GM12878 (cell line): ENCODE measurements at regions of chr17 and their contacts with region 1.

Region 1: DNA sequence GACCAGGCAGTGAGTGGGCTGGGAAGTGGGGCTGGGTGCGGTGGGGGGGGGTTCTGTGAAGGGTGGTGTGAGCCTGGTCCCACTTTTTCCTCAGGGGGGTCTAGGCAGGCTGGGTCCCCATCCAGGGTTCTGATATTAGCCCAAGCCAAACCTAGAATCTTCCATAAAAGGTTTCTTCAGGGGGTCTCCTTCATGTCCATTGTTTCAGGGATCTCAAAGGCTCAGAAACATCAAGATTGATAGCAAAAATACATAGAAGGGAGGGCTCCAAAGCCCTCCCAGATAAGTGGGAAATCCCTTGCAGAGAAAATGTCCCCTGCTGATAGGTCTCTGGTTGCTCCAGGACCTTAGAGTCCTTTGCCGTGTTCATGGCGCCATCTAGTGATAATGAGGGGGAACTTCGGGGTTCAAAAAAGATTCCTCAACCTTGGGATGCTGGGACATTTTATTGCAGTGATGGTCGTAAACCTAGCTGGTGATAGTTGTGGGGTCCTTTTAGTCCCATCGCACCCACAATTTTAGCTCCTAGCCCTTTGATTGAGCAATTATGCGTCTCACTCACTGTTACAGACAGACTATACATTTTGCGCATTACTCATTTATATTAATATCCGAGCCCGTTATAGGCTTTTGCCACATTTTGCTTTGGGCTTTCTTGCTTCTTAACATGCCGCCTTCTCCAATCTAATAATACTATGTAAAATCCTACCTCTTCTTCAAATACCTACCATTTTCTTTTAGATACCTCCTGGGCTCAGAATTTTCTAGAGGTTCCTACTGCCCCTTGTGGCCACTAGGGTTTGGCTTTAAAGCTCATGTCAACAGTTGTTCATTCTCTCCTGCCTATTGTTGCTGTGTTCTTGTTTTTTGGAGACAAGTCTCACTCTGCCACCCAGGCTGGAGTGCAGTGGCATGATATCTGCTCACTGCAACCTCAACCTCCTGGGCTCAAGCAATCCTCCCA is 35.1 kb downstream of the IGF2BP1 start:
- DNase-seq: peak; percentile 16
- ATAC-seq: peak; percentile 92
- H3K4me3 ChIP-seq: no peak overlapping the region
- H3K27ac ChIP-seq: no peak overlapping the region
- H3K4me1 ChIP-seq: no peaks in the 10 kb centered on the region
- H3K27me3 ChIP-seq: no peaks in the 10 kb centered on the region
- CTCF ChIP-seq: peak; percentile 69 to 96 (median 86)
- EP300 ChIP-seq: no peak
- POLR2A ChIP-seq: no peak
- RAD21 ChIP-seq: peak; percentile 97

Region 2: GRCh38 chr17:48724251-48725003 is 307.8 kb before region 1 on chr17:
- CTCF ChIA-PET with region 1: interaction called, 12 read pairs
- POLR2A ChIA-PET with region 1: no interaction called
- RAD21 ChIA-PET with region 1: no interaction called
- SMC1A ChIA-PET with region 1: interaction called, 3 read pairs
- in situ Hi-C with region 1: no loop called
- intact Hi-C with region 1: no loop called
- DNase-seq: peak; percentile 3
- ATAC-seq: peak; percentile 94
- H3K4me3 ChIP-seq: no peak overlapping the region
- H3K27ac ChIP-seq: no peak overlapping the region
- H3K4me1 ChIP-seq: no peaks in the 10 kb centered on the region; the same call in 1 of the 2 replicates
- H3K27me3 ChIP-seq: peaks cover 34 to 58% of the 10 kb centered on the region in 2 experiments
- CTCF ChIP-seq: peak; percentile 60 to 75 (median 73)
- EP300 ChIP-seq: no peak
- POLR2A ChIP-seq: no peak
- RAD21 ChIP-seq: peak; percentile 83

Region 3: DNA sequence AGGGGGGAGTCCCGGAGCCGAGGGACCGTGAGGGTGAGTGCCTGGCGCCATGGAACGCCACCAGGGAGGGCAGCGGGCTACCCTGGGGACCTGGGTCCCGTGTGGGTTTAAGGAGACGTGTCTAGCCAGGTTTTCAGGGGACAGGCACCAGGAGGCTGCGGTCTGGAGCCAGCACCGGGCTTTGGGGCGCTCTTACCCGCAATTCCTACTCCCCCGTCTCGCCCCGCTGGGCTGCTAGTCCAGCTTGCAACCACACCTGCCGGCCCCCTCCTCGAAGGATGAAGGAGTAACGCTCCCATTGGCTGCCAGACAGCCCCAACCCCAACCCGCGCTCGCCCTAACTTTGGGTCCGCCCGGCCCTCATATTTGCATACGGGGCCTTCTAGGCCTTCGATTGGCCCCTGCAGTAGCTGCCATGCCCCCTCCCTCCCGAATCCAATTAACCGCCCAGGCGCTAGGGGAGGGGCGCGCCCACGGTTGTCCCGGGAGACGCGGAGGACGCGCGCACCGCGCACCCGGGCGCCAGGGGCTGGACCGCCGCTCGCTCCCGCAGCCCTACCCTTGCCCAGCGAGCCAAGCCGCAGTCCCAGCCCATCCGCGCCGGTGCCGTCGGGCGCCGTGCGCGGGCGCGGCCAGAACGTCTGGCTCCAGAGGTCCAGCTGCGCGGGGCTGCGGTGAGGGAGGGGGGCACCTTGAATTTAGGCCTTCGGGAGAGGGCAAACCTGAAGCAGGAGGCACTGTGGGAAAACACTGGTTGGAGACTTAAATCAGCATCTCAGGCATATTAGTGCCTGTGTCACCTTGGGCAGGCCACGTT is 215.3 kb before region 1 on chr17 and contains the start of gene TTLL6:
- CTCF ChIA-PET with region 1: interaction called, 17 read pairs
- POLR2A ChIA-PET with region 1: no interaction called
- RAD21 ChIA-PET with region 1: interaction called, 5 read pairs
- SMC1A ChIA-PET with region 1: interaction called, 3 read pairs
- in situ Hi-C with region 1: no loop called
- intact Hi-C with region 1: no loop called
- DNase-seq: no peak
- ATAC-seq: peak; percentile 97
- H3K4me3 ChIP-seq: peak within 1 kb of the TSS; percentile 58
- H3K27ac ChIP-seq: no peak within 1 kb of the TSS
- H3K4me1 ChIP-seq: peaks cover 12% of the 10 kb centered on the region
- H3K27me3 ChIP-seq: peaks cover 0 to 6% of the 10 kb centered on the region in 2 experiments; a peak in 1 of 4 replicates
- CTCF ChIP-seq: no peak
- EP300 ChIP-seq: no peak
- POLR2A ChIP-seq: no peak
- RAD21 ChIP-seq: no peak
- polyA plus RNA-seq, gene TTLL6: not detected

Region 4: DNA sequence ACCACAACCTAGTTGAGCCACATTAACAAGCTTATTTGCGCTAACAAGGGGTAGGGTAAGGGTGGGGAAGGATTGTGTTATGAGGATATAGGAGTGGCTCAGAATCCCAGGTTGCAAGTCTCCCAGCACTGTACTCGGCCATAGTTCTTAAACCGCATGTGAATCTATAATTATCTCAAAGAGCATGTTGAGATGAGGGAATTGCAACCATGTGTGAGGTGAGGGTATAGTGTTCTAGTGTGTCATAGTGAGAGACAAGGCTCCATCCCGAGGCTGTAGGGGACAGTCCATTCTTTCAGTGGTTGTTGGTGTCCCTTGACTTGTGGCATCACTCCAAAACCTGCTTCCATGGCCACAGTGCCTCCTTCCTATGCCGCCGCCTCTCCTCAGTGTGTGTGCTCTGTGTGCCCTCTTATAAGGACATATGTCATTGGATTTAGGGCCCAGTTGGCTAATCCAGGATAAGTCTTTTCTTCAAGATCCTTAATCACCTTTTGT is 162.4 kb before region 1 on chr17:
- CTCF ChIA-PET with region 1: no interaction called
- POLR2A ChIA-PET with region 1: no interaction called
- RAD21 ChIA-PET with region 1: no interaction called
- SMC1A ChIA-PET with region 1: no interaction called
- in situ Hi-C with region 1: no loop called
- intact Hi-C with region 1: no loop called
- DNase-seq: no peak
- ATAC-seq: no peak
- H3K4me3 ChIP-seq: no peak overlapping the region
- H3K27ac ChIP-seq: no peak overlapping the region
- H3K4me1 ChIP-seq: no peaks in the 10 kb centered on the region
- H3K27me3 ChIP-seq: no peaks in the 10 kb centered on the region
- CTCF ChIP-seq: no peak
- EP300 ChIP-seq: no peak
- POLR2A ChIP-seq: no peak
- RAD21 ChIP-seq: no peak

Region 5: DNA sequence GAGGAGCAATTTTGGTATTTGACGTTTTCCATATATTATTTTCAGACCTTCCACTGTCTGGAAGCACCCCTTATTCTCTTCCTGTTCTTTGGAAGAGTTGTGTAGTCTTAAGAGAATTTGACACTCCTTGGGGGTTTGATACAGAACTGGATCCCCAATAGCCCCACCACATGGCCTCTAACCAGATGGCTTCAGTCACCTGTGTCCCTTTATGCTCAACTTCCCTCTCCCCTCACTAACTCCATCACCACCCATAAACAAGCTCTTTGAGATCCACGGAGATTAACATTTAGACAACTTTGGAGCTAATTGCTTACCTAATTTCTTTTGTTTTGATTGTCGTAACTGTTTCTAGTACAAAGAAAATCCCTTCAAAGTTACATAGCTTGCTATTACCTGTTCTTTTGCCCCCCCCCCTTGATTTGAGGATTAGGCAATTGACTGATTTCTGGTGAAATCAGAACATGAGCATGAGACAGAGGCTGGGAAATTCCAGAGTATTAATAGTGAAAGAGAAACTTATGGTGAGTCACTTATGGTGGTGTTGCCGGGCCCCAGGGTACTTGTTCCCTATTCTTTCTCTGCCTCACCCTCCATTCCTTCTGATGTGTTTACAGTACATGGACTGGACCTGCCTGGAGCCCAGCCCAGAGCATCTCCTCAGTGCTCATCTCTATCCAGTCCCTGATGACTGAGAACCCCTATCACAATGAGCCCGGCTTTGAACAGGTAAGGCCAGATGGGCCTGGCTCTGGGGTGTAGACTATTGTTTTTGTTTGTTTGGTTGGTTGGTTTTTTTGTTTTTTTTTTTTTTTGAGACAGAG is 116.6 kb before region 1 on chr17:
- CTCF ChIA-PET with region 1: interaction called, 12 read pairs
- POLR2A ChIA-PET with region 1: interaction called, 4 read pairs
- RAD21 ChIA-PET with region 1: interaction called, 4 read pairs
- SMC1A ChIA-PET with region 1: interaction called, 3 read pairs
- in situ Hi-C with region 1: no loop called
- intact Hi-C with region 1: no loop called
- DNase-seq: peak; percentile 74
- ATAC-seq: peak; percentile 86
- H3K4me3 ChIP-seq: peak overlapping the region; percentile 43
- H3K27ac ChIP-seq: peak overlapping the region; percentile 93
- H3K4me1 ChIP-seq: peaks cover 33% of the 10 kb centered on the region
- H3K27me3 ChIP-seq: no peaks in the 10 kb centered on the region
- CTCF ChIP-seq: no peak
- EP300 ChIP-seq: peak; percentile 57 to 84; a peak in 2 of 4 replicates
- POLR2A ChIP-seq: no peak
- RAD21 ChIP-seq: no peak

Region 6: DNA sequence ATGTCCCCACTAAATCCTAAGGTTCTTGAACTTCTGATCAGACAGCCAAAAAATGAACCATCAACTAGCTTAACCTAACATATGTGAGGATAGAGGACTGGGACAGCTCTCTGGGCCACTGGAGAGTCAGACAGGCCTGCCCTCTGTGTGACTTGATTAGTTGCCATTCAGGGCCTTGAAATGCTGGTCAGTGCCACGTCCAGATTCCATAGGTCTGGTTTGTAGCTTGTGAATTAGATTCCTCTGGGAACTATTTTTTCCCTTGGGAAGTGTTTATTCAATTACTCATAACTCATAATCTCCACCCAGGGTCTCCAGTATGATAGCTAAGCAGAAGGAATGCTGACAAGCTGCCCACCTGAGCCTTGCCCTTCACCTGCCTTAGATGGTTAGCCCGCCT is 13.1 kb after region 1 on chr17:
- CTCF ChIA-PET with region 1: interaction called, 16 read pairs
- POLR2A ChIA-PET with region 1: no interaction called
- RAD21 ChIA-PET with region 1: no interaction called
- SMC1A ChIA-PET with region 1: interaction called, 3 read pairs
- in situ Hi-C with region 1: no loop called
- intact Hi-C with region 1: no loop called
- DNase-seq: no peak
- ATAC-seq: no peak
- H3K4me3 ChIP-seq: no peak overlapping the region
- H3K27ac ChIP-seq: no peak overlapping the region
- H3K4me1 ChIP-seq: no peaks in the 10 kb centered on the region
- H3K27me3 ChIP-seq: peaks cover 0 to 4% of the 10 kb centered on the region in 2 experiments; a peak in 2 of 4 replicates
- CTCF ChIP-seq: no peak
- EP300 ChIP-seq: no peak
- POLR2A ChIP-seq: no peak
- RAD21 ChIP-seq: no peak

Region 7: GRCh38 chr17:49249292-49249794 is 217.1 kb after region 1 on chr17:
- CTCF ChIA-PET with region 1: no interaction called
- POLR2A ChIA-PET with region 1: no interaction called
- RAD21 ChIA-PET with region 1: no interaction called
- SMC1A ChIA-PET with region 1: no interaction called
- in situ Hi-C with region 1: no loop called
- intact Hi-C with region 1: no loop called
- DNase-seq: no peak
- ATAC-seq: peak; percentile 21; the same call in 2 of the 3 replicates
- H3K4me3 ChIP-seq: no peak overlapping the region
- H3K27ac ChIP-seq: no peak overlapping the region
- H3K4me1 ChIP-seq: no peaks in the 10 kb centered on the region
- H3K27me3 ChIP-seq: peaks cover 2% of the 10 kb centered on the region in 2 experiments; a peak in 3 of 4 replicates
- CTCF ChIP-seq: no peak
- EP300 ChIP-seq: no peak
- POLR2A ChIP-seq: no peak
- RAD21 ChIP-seq: no peak